H1 (cell line): ENCODE measurements at regions of chrX and their contacts with region 1.

Region 1: DNA sequence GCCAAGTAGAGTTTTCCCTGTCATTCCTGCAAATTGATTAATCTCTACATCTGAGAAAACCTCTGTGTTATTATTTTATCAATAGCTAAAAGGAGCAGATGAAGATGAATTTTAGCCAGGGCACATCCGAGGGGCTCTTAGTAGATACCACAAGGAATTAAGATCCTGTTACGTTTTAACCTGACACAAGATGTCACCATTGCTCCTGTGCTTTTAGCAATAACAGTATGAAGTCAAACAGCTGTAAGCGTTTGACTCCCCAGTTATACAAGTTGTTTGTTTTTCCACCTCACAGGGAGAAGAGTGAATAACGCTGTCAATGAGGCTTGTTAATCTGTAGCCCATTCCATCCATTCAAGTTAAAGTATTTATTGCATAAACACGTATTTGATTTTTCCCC is 76.0 kb upstream of the AP1S2 start:
- DNase-seq: no peak
- H3K4me3 ChIP-seq: no peak overlapping the region
- H3K27ac ChIP-seq: no peak overlapping the region
- H3K4me1 ChIP-seq: peaks cover 0 to 6% (median 0%) of the 10 kb centered on the region in 4 experiments; a peak in 1 of 7 replicates
- H3K27me3 ChIP-seq: no peaks in the 10 kb centered on the region
- CTCF ChIP-seq: peak in 2 of 3 experiments; percentile 42 to 46; a peak in 2 of 4 replicates
- EP300 ChIP-seq: no peak
- POLR2A ChIP-seq: no peak
- RAD21 ChIP-seq: peak; percentile 83 to 87

Region 2: GRCh38 chrX:15973299-15973698 is 42.7 kb after region 1 on chrX:
- CTCF ChIA-PET with region 1: interaction called, 23 read pairs
- POLR2A ChIA-PET with region 1: no interaction called
- DNase-seq: peak in 1 of 2 experiments; percentile 25
- H3K4me3 ChIP-seq: no peak overlapping the region
- H3K27ac ChIP-seq: no peak overlapping the region
- H3K4me1 ChIP-seq: no peaks in the 10 kb centered on the region
- H3K27me3 ChIP-seq: no peaks in the 10 kb centered on the region
- CTCF ChIP-seq: peak; percentile 46 to 83 (median 65)
- EP300 ChIP-seq: no peak
- POLR2A ChIP-seq: no peak
- RAD21 ChIP-seq: peak; percentile 74 to 83

Region 3: DNA sequence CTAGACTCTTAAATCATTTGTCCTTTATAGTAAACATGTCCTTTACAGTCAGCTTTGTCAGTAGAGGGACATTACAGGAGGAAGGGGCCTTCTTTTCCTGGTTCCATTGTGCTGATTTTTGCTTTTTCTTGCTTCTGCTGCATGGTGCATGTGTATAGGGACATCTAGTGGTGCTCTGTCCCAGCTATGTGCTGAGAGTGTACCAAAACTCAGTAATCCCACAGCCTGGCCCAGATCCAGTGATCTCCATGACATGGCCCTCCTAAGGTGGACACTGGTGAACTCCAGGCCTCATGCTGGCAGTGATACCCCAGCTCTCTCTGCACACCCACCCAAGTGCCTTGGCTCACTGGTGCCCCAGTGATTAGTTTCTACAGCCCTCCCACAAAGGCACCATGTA is 281.9 kb after region 1 on chrX:
- CTCF ChIA-PET with region 1: interaction called, 10 read pairs
- POLR2A ChIA-PET with region 1: no interaction called
- DNase-seq: no peak
- H3K4me3 ChIP-seq: no peak overlapping the region
- H3K27ac ChIP-seq: no peak overlapping the region
- H3K4me1 ChIP-seq: peaks cover 2 to 16% (median 4%) of the 10 kb centered on the region in 4 experiments; a peak in 5 of 7 replicates
- H3K27me3 ChIP-seq: no peaks in the 10 kb centered on the region
- CTCF ChIP-seq: peak in 2 of 3 experiments; percentile 44 to 52; a peak in 3 of 4 replicates
- EP300 ChIP-seq: no peak
- POLR2A ChIP-seq: no peak
- RAD21 ChIP-seq: peak; percentile 80 to 83

Region 4: DNA sequence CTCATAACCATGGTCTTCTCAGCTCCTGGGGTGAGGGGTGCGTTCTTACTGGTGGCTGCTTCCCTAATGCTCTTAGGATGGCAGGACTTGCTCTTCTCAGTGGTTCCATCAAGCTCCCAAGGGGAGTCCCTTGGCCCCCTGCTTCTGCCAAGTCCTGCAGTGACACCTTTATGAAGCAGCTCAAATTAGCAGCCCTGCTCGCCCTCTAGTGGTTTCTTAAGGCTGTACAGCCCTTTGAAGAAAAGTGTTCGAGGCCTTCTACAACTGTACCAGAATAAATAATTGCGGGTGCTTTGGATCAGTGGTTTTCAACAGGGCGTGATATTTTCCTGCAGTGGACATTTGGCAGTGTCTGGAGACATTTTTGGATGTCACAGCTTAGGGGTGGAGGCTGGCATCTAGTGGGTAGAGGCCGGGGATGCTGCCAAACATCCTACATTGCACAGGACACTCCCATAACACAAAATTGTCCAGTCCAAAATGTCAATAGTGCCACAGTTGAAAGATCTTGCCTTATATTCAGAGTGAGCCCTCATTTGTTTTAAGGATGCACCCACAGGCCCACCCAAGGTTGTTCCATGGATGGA is 514.7 kb after region 1 on chrX:
- CTCF ChIA-PET with region 1: interaction called, 11 read pairs
- POLR2A ChIA-PET with region 1: no interaction called
- DNase-seq: no peak
- H3K4me3 ChIP-seq: no peak overlapping the region
- H3K27ac ChIP-seq: no peak overlapping the region
- H3K4me1 ChIP-seq: peaks cover 0 to 2% (median 0%) of the 10 kb centered on the region in 4 experiments; a peak in 1 of 7 replicates
- H3K27me3 ChIP-seq: no peaks in the 10 kb centered on the region
- CTCF ChIP-seq: peak; percentile 12 to 72 (median 52)
- EP300 ChIP-seq: no peak
- POLR2A ChIP-seq: no peak
- RAD21 ChIP-seq: peak; percentile 71 to 78